A673 (cell line): ENCODE measurements at regions of chr4 and their contacts with region 1.

Region 1: DNA sequence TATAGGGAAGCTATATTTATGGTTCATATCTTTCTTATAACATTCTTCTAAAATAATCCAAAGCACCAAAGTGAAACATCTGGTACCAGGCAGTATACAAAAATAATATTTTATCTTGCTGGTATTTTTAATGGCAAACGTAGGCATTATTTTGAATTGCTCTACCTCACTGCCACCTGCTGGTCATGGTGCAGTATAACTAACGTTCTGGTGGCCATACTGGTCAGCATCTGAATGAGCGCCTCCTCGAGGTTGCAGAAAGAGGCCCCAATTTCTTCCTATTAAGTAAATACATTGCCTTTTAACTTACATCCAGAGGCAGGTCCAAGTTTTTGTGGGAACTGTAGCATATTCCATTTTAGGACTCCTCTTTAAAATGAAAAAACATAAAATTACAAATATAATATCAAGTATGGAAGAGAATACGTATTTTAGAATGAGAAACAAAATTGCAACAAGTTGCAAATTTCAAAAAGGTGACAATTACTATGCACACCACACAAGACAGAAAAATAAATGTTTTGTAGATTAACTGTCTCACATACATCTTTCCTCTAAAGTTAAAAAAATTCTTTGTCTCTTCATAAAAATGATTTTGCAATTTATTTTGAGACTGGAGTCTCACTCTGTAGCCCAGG is 22.9 kb upstream of the CWH43 start:
- DNase-seq: peak; percentile 91
- H3K4me3 ChIP-seq: no peak overlapping the region
- H3K27ac ChIP-seq: no peak overlapping the region
- H3K4me1 ChIP-seq: no peaks in the 10 kb centered on the region
- H3K27me3 ChIP-seq: no peaks in the 10 kb centered on the region
- CTCF ChIP-seq: peak; percentile 99

Region 2: GRCh38 chr4:48127682-48128394 is 835.3 kb before region 1 on chr4:
- CTCF ChIA-PET with region 1: no interaction called
- POLR2A ChIA-PET with region 1: no interaction called
- intact Hi-C with region 1: loop called (anchors 10 kb)
- DNase-seq: peak; percentile 82
- H3K4me3 ChIP-seq: no peak overlapping the region
- H3K27ac ChIP-seq: no peak overlapping the region
- H3K4me1 ChIP-seq: peaks cover 17% of the 10 kb centered on the region
- H3K27me3 ChIP-seq: no peaks in the 10 kb centered on the region
- CTCF ChIP-seq: peak; percentile 79

Region 3: DNA sequence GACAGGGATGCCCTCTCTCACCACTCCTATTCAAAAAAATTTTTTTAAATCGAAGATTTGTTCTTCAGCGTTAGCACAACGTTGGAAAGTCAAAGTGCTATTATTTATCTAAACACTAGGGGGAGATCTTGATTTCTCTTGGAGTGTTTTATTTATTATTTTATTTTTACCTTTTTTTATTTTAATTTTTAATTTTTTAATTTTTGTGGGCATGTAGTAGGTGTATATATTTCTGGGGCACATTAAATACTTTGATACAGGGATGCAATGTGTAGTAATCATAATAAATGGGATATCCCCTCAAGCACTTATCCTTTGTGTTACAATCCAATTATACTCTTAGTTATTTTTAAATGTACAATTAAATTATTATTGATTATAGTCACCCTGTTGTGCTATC is 517.5 kb before region 1 on chr4:
- CTCF ChIA-PET with region 1: no interaction called
- POLR2A ChIA-PET with region 1: no interaction called
- intact Hi-C with region 1: loop called (anchors 10 kb)
- DNase-seq: peak; percentile 29
- H3K4me3 ChIP-seq: no peak overlapping the region
- H3K27ac ChIP-seq: no peak overlapping the region
- H3K4me1 ChIP-seq: peaks cover 1% of the 10 kb centered on the region
- H3K27me3 ChIP-seq: no peaks in the 10 kb centered on the region
- CTCF ChIP-seq: peak; percentile 55

Region 4: DNA sequence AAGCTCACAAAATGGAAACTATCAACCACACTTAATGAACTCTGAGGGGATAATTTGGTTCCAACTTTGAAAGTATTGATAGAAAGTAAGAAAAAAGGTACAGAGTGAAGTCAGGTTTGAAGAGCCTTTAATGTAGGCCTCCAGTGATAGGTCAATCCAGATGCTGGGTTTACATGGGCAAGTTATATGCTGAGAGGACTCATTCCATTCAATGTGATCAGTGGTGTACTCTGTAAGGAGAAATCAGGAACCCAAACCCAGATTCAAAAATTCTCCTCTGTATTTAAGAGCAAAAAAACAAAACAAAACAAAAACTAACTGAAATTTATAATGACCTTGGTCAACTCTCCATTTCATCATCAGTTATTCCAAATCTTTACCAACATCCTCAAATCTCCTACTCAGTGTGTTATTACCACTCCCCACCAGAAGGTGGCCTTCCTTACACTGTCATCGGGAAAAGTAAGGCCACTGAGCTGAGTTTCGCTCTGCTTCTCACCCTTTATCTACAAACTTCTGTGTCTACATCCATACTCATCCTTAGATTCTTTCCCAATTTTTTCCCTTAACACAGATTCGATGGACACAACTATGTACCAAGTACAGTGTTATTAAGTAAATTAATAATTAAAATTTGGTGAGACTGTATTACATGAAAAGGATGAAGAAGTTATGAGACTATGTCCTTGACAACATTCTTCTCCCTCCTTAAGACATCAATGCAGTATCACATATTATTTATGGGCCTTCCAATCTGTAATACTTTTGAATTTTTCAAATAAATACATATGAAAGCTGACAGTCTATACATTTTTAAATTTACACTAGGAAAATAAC is 384.8 kb before region 1 on chr4:
- CTCF ChIA-PET with region 1: interaction called, 5 read pairs
- POLR2A ChIA-PET with region 1: no interaction called
- intact Hi-C with region 1: loop called (anchors 1 kb)
- DNase-seq: peak; percentile 76
- H3K4me3 ChIP-seq: no peak overlapping the region
- H3K27ac ChIP-seq: no peak overlapping the region
- H3K4me1 ChIP-seq: no peaks in the 10 kb centered on the region
- H3K27me3 ChIP-seq: no peaks in the 10 kb centered on the region
- CTCF ChIP-seq: peak; percentile 85

Region 5: GRCh38 chr4:48877827-48878533 is 85.2 kb before region 1 on chr4:
- CTCF ChIA-PET with region 1: no interaction called
- POLR2A ChIA-PET with region 1: no interaction called
- intact Hi-C with region 1: loop called (anchors 5 kb)
- DNase-seq: no peak
- H3K4me3 ChIP-seq: no peak overlapping the region
- H3K27ac ChIP-seq: no peak overlapping the region
- H3K4me1 ChIP-seq: no peaks in the 10 kb centered on the region
- H3K27me3 ChIP-seq: no peaks in the 10 kb centered on the region
- CTCF ChIP-seq: no peak

Region 6: GRCh38 chr4:49063670-49064069 is 100.5 kb after region 1 on chr4:
- CTCF ChIA-PET with region 1: no interaction called
- POLR2A ChIA-PET with region 1: no interaction called
- intact Hi-C with region 1: no loop called
- DNase-seq: no peak
- H3K4me3 ChIP-seq: no peak overlapping the region
- H3K27ac ChIP-seq: no peak overlapping the region
- H3K4me1 ChIP-seq: no peaks in the 10 kb centered on the region
- H3K27me3 ChIP-seq: no peaks in the 10 kb centered on the region
- CTCF ChIP-seq: no peak